Left ventricle myocardium superior (tissue), 1 donor: ENCODE measurements at regions of chr14 and their contacts with region 1.

Region 1: DNA sequence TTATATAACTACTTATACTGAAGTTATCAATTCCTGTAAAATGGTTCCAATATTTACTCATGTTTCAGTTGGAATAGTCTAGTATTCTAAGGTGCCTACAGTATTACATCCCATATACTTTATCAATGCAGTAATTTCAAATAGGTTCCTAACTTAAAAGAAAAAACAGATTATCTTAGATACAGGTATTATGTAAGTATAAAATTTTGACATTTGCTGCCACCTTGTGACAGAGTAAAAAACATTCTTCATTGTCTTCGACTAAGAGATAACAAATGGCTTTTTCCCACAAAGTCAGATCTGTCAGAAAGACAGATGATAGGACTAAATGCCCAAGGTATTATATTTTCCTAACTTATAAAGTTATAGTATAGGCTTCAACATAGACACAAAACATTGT is 78.7 kb downstream of the TXNDC16 start:
- DNase-seq: no peak
- ATAC-seq: no peak

Region 2: GRCh38 chr14:52299692-52300278 is 173.8 kb before region 1 on chr14:
- intact Hi-C with region 1: loop called (anchors 5 kb)
- DNase-seq: no peak
- ATAC-seq: peak; percentile 43

Region 3: DNA sequence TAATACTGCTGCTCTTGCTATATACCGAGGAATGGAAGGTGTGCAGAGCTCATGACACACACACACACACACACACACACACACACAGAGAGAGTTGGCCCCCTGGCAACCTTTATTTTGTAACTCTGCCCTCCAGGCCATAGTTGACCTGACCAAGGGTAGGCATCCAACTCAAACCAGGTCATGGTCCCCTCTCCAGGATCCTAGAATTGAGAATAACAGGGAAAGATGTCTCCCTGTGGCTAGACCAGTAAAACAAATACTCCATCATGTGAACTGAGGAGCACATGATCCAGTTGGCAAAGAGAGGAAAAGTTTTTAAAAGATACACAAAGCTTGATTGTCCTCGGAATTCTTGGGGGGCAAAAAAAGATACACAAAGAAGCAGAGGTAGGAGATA is 210.5 kb after region 1 on chr14:
- intact Hi-C with region 1: no loop called
- DNase-seq: no peak
- ATAC-seq: no peak

Region 4: GRCh38 chr14:53044486-53044885 is 570.9 kb after region 1 on chr14:
- intact Hi-C with region 1: no loop called
- DNase-seq: no peak
- ATAC-seq: no peak